ENCODE measurements at regions of chr15 and their contacts with region 1.

Region 1: GRCh38 chr15:71728881-71729280 is 81.5 kb upstream of the NR2E3 start:
- DNase-seq: no peak
- CTCF ChIP-seq: no peak

Region 2: GRCh38 chr15:71469413-71469812 is 259.5 kb before region 1 on chr15:
- in situ Hi-C with region 1: loop called (anchors 10 kb)
- DNase-seq: no peak
- CTCF ChIP-seq: no peak

Region 3: GRCh38 chr15:72098040-72098439 is 369.2 kb after region 1 on chr15:
- in situ Hi-C with region 1: no loop called
- DNase-seq: no peak
- CTCF ChIP-seq: no peak